GM12878 (cell line): ENCODE measurements at regions of chr5 and their contacts with region 1.

Region 1: GRCh38 chr5:65021527-65022226 is 252.9 kb downstream of the CWC27 start:
- DNase-seq: peak; percentile 41
- ATAC-seq: peak; percentile 87
- H3K4me3 ChIP-seq: no peak overlapping the region
- H3K27ac ChIP-seq: peak overlapping the region; percentile 57
- H3K4me1 ChIP-seq: peaks cover 25% of the 10 kb centered on the region
- H3K27me3 ChIP-seq: no peaks in the 10 kb centered on the region
- CTCF ChIP-seq: no peak
- EP300 ChIP-seq: peak in 1 of 2 experiments; percentile 12; a peak in 1 of 4 replicates
- POLR2A ChIP-seq: no peak
- RAD21 ChIP-seq: no peak

Region 2: GRCh38 chr5:64727150-64727549 is 294.5 kb before region 1 on chr5:
- CTCF ChIA-PET with region 1: no interaction called
- POLR2A ChIA-PET with region 1: no interaction called
- RAD21 ChIA-PET with region 1: no interaction called
- SMC1A ChIA-PET with region 1: no interaction called
- in situ Hi-C with region 1: no loop called
- intact Hi-C with region 1: no loop called
- DNase-seq: no peak
- ATAC-seq: no peak
- H3K4me3 ChIP-seq: no peak overlapping the region
- H3K27ac ChIP-seq: no peak overlapping the region
- H3K4me1 ChIP-seq: no peaks in the 10 kb centered on the region
- H3K27me3 ChIP-seq: no peaks in the 10 kb centered on the region
- CTCF ChIP-seq: no peak
- EP300 ChIP-seq: no peak
- POLR2A ChIP-seq: no peak
- RAD21 ChIP-seq: no peak

Region 3: DNA sequence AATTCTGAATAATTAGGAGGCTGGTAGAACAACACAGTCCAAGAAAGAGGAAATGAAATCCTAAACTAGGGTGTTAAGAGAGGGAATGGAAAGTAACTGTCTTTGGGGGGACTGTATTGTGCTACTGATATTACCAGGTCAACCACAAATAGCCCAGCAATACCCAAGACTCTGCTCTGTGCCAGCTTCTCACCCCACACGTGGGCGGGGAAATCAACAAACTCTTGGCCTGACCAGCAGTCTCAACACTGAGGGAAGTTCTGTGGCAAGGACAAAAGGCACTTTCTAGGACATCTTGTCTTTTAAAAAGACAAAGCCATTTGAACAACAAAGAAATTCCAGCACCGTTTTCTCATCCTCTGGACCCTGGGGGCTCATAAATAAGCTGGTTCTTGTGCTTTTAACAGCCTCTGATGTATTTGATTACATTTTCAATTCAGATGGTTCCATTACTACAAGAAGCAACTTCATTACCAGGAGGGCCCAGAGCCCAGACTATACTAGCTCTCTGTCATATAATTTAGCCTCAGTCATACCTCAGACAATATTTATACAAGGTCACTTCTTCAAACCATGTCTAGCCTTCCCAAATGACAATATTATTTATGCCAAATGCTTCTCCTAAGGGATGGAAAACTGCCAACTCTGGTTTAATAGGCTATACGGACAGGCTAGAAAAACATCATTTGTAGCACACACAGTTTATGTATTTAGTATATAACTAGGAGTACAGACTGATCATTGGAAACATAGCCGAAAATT is 44.9 kb after region 1 on chr5:
- CTCF ChIA-PET with region 1: interaction called, 4 read pairs
- POLR2A ChIA-PET with region 1: interaction called, 5 read pairs
- RAD21 ChIA-PET with region 1: interaction called, 6 read pairs
- SMC1A ChIA-PET with region 1: interaction called, 13 read pairs
- in situ Hi-C with region 1: no loop called
- intact Hi-C with region 1: no loop called
- DNase-seq: peak; percentile 92
- ATAC-seq: peak; percentile 77
- H3K4me3 ChIP-seq: no peak overlapping the region
- H3K27ac ChIP-seq: peak overlapping the region; percentile 77
- H3K4me1 ChIP-seq: peaks cover 64% of the 10 kb centered on the region
- H3K27me3 ChIP-seq: no peaks in the 10 kb centered on the region
- CTCF ChIP-seq: no peak
- EP300 ChIP-seq: peak; percentile 78 to 92
- POLR2A ChIP-seq: no peak
- RAD21 ChIP-seq: no peak